ENCODE measurements at regions of chr13 and their contacts with region 1.

Region 1: DNA sequence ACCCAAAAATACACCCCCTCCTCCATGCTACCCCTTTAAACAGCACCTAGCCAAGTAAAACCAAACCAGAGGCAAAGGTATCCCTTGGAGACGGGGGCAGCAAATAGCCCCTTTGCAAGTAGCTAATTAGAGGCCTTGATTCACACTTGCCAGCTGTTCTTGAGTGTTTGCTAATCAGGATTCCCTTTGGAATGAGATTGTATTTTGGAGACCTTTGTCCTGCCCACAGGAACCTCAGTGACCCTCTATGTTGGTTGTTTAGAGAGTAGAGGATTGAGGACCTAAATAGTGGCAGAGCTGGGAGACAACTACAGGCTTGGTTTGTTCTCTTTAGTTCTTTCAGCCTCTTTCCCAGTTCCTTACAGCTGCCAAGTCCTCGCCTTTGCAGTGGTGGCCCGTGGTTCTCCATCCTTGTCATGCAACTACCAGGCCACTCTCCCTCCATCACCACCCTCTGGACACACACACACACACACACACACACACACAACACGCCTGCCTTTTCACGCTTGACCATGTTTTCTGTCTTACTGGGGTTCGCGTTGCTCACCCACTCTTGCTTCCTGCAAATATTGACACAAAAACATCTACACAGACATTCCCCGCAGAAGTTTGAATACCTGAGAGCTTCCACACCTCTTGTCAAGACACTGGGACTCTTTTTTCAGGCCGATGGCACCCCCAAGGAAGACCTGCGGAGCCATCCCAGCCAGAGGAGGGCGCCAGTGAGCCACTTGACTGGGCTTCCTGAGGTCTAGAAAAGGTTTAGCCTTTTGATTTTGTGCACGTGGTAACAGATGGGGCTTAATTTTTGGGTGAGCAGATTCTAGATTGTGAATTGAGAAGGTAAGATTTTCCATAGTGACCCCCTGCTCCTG is 80.0 kb upstream of the GPR183 start:
- DNase-seq: peak in 1 of 2 donors; percentile 62
- ATAC-seq: no peak
- H3K4me3 ChIP-seq: no peak overlapping the region
- H3K27ac ChIP-seq: peak overlapping the region in 1 of 10 donors; percentile 56
- H3K4me1 ChIP-seq: peaks cover 0 to 25% (median 4%) of the 10 kb centered on the region in 9 donors
- H3K27me3 ChIP-seq: no peaks in the 10 kb centered on the region
- CTCF ChIP-seq: peak in 7 of 9 donors; percentile 23 to 79 (median 50)

Region 2: GRCh38 chr13:98349731-98350305 is 1037.3 kb before region 1 on chr13:
- intact Hi-C with region 1: loop called in 1 of 10 experiments (anchors 10 kb)
- DNase-seq: peak; percentile 15 to 25
- ATAC-seq: peak in 6 of 8 donors; percentile 20 to 83 (median 68)
- H3K4me3 ChIP-seq: no peak overlapping the region
- H3K27ac ChIP-seq: no peak overlapping the region
- H3K4me1 ChIP-seq: peaks cover 0 to 12% (median 0%) of the 10 kb centered on the region in 9 donors
- H3K27me3 ChIP-seq: no peaks in the 10 kb centered on the region
- CTCF ChIP-seq: peak in 7 of 9 donors; percentile 27 to 61 (median 41)